Activated naive CD4-positive, alpha-beta T cell treated with anti-CD3 and anti-CD28 coated beads, Interleukin-2, amount 10 ng/mL, durations not matched to agents 7 days and 5 days (primary cell): ENCODE measurements at regions of chr15 and their contacts with region 1.

Region 1: GRCh38 chr15:40108855-40109735 is at the start of gene BMF:
- DNase-seq: peak; percentile 99
- H3K4me3 Mint-ChIP-seq: peak within 1 kb of the TSS; percentile 90
- H3K27ac Mint-ChIP-seq: peak within 1 kb of the TSS; percentile 84
- H3K4me1 Mint-ChIP-seq: peaks cover 53% of the 10 kb centered on the region
- H3K27me3 Mint-ChIP-seq: peaks cover 64% of the 10 kb centered on the region

Region 2: GRCh38 chr15:40038638-40039543 is 70.2 kb before region 1 on chr15 and contains the start of gene SRP14:
- CTCF ChIA-PET with region 1: interaction called, 255 read pairs
- DNase-seq: peak; percentile 96
- H3K4me3 Mint-ChIP-seq: peak within 1 kb of the TSS; percentile 95
- H3K27ac Mint-ChIP-seq: peak within 1 kb of the TSS; percentile 95
- H3K4me1 Mint-ChIP-seq: peaks cover 49% of the 10 kb centered on the region
- H3K27me3 Mint-ChIP-seq: no peaks in the 10 kb centered on the region

Region 3: DNA sequence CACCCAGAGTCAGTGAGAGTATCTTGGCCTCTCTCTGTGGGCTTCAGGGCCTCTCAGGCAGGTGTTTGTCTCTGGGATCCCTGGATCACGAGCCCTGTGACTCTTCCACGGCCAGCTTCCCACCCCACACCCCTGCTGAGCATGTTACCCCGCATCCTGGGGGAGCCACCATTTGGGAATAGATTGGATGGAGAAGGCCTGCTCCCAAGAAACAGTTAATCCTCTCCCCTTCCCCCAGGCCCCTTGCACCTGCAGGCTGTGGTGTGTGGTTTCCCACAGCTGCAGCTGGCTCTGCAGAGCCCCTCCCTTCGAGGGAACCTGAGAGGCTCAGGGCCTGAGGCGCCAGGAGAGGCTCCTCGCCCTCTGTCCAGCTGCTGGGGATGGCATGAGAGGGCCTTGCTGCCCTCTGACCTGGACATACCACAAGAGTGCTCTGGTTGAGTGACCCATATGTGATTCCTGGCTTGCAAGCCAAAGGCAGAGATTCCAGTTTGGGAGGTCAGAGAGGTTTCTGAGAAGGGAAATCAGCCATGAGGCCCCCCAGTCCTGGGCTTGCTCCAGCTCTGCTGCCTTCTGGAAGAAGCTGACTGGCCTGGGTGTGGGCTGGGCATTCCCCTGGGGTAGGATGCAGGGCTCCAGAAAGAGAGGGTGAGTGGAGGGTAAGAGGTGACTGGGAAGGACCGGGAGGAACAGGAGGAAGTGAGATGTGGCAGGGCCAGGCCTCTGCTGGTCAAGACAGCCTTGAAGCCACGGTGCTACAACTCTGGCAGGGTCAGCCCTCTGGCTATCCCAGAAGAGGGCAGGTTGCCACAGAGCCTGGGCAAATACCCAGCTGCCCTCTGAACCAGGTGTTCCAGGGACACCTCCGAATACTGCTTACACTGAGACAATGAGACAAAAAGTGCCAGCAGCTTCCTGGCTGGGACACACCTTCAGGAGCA is 54.2 kb before region 1 on chr15:
- CTCF ChIA-PET with region 1: interaction called, 255 read pairs
- DNase-seq: peak; percentile 75
- H3K4me3 Mint-ChIP-seq: peak overlapping the region; percentile 57
- H3K27ac Mint-ChIP-seq: peak overlapping the region; percentile 93
- H3K4me1 Mint-ChIP-seq: peaks cover 82% of the 10 kb centered on the region
- H3K27me3 Mint-ChIP-seq: peaks cover 8% of the 10 kb centered on the region

Region 4: DNA sequence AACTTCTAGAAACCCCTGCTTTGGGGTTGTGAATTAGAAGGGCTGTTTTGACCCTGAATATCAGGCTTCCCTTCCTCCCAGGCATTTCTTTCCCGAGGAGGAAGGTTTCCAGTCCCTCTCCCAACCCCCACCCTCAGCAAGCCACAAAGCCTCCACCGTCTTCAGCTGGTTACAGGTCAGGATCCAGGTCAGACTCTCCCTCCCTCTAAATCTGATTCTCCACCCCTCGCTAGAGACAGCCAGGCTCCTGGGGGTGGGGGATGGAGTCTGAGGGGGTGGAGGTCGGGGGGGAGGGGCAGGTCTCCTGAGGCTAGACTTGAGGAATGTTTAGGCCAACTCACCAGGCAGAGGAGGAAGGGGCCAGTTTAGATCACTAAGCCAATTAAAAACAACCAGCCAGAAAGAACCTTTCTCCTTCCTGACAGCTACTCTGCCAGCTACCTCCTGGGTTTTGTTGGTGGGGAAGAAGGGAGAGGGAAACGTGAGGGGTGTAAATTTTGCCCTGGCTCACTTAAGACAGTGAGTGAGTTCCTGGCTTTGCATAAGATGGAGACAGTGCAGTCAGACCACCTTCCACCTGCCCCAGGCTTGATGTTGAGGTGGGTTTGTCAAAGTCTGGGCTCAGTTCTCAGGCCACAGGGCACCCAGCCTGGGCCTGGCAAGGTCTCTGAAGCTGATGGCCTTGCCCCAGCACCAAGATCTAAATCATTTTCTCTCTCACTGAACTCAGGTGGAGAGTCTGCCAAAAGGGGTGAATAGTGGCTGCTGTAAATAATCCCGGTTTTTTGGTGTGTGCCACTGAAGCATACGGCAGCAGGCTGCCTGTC is 20.0 kb before region 1 on chr15:
- CTCF ChIA-PET with region 1: interaction called, 59 read pairs
- DNase-seq: no peak
- H3K4me3 Mint-ChIP-seq: no peak overlapping the region
- H3K27ac Mint-ChIP-seq: no peak overlapping the region
- H3K4me1 Mint-ChIP-seq: peaks cover 15% of the 10 kb centered on the region
- H3K27me3 Mint-ChIP-seq: peaks cover 33% of the 10 kb centered on the region

Region 5: DNA sequence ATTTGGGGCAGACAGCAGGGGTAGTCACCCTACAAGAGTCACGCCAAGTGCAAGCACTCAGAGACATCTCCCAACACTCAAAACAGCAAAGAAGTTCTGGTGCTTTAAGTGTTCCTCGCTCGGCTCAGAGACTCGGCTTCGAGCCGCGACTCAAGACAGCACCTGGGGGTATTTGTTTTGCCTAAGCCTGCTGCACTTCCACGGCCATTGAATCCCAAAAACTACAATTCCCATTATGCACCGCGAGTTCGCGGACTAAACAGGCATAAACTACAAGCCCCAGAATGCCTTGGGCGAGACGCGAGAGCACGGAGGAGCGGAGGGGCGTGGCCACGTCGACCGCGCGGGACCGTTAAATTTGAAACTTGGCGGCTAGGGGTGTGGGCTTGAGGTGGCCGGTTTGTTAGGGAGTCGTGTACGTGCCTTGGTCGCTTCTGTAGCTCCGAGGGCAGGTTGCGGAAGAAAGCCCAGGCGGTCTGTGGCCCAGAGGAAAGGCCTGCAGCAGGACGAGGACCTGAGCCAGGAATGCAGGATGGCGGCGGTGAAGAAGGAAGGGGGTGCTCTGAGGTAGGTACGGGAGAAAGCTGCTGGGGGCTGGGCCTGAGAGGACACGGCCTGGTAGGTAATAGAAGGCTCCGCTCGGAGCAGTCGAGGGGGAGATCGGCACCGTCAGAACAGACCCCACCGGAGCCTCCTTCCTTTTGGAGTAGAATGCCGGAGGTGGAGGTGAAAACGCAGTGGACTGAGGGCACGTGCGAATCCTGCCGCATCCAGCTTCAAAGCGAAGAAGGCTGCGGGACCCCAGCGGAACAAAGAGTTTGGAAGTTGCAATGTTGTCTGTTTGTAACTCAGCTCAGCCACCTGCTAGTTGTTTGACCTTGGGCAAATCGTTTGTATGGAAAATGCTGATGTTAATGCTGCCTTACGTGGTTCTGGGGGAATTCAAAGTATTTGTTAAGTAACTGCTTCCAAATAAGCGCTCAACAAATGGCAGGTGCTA is 51.9 kb after region 1 on chr15 and contains the start of gene BUB1B:
- CTCF ChIA-PET with region 1: interaction called, 23 read pairs
- DNase-seq: peak; percentile 96
- H3K4me3 Mint-ChIP-seq: no peak within 1 kb of the TSS
- H3K27ac Mint-ChIP-seq: no peak within 1 kb of the TSS
- H3K4me1 Mint-ChIP-seq: peaks cover 11% of the 10 kb centered on the region
- H3K27me3 Mint-ChIP-seq: peaks cover 16% of the 10 kb centered on the region